Activated T-helper 1 cell treated with anti-CD3 and anti-CD28 coated beads, Interleukin-12 subunit alpha, Interleukin-12 subunit beta, Interleukin-2, Interleukin-4 antibody, amounts not matched to agents 30 ng/mL and 10 ng/mL and 1 ng/mL, durations not matched to agents 14 hours and 24 hours and 36 hours (primary cell): ENCODE measurements at regions of chr7 and their contacts with region 1.

Region 1: DNA sequence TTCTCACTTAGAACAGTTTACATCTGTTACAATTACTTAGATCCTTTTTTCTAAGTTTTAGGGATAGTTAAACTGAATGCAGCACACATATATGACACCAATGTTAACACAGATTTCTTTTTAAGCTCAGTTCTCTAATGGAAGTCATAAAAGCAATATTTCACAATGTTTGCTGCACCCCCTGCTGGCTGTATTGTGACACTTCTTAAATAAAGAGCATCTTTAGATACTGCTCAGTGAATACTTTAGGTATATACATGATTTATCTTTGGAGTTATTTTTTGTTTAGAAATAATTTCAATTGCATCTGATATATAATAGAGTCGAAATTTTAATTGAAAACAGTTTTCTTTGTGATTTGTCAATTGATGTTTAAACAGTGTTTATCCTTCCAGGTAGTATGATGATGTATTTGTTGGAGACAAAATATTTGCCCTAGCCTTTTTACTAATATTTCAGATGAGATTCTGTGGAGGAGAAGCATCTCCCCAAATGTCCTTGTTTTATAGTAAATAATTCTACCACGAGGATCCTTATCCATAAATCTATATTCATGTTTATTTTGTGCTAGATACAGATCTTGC is 174.4 kb downstream of the ST7 start:
- DNase-seq: no peak
- H3K4me3 Mint-ChIP-seq: no peak overlapping the region
- H3K27ac Mint-ChIP-seq: no peak overlapping the region
- H3K4me1 Mint-ChIP-seq: no peaks in the 10 kb centered on the region
- H3K27me3 Mint-ChIP-seq: peaks cover 9% of the 10 kb centered on the region

Region 2: GRCh38 chr7:116311816-116312471 is 815.7 kb before region 1 on chr7:
- intact Hi-C with region 1: loop called (anchors 5 kb)
- DNase-seq: no peak
- H3K4me3 Mint-ChIP-seq: no peak overlapping the region
- H3K27ac Mint-ChIP-seq: no peak overlapping the region
- H3K4me1 Mint-ChIP-seq: peaks cover 2% of the 10 kb centered on the region
- H3K27me3 Mint-ChIP-seq: peaks cover 2% of the 10 kb centered on the region

Region 3: DNA sequence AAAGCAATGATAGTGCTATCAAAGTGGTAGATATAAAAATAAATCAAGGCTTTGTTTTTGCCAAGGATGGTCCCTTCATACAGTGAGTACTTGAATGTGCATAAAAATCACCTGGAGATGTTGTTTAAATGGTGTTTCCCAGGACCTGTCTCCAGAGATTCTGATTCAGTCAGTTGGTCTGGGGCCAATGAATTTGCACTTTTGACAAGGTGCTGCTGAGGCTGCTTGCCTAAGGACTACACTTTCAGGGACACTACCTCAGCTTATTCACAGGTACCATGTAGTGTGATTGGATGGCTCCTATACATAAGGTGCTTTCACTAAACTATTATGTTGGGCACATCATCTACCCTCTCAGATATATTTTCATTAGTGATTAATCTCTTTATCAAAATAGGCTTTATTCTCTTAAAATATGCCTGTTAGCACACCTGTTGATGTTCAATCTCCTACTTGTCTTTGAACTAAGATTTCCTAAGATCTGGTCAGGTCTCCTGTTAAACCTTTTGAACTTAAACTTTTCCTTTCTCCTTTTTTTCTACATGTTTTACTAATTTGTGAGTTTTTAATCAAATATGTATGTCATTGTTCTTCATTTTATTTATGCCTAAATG is 241.0 kb before region 1 on chr7:
- intact Hi-C with region 1: no loop called
- DNase-seq: no peak
- H3K4me3 Mint-ChIP-seq: no peak overlapping the region
- H3K27ac Mint-ChIP-seq: no peak overlapping the region
- H3K4me1 Mint-ChIP-seq: peaks cover 4% of the 10 kb centered on the region
- H3K27me3 Mint-ChIP-seq: no peaks in the 10 kb centered on the region

Region 4: DNA sequence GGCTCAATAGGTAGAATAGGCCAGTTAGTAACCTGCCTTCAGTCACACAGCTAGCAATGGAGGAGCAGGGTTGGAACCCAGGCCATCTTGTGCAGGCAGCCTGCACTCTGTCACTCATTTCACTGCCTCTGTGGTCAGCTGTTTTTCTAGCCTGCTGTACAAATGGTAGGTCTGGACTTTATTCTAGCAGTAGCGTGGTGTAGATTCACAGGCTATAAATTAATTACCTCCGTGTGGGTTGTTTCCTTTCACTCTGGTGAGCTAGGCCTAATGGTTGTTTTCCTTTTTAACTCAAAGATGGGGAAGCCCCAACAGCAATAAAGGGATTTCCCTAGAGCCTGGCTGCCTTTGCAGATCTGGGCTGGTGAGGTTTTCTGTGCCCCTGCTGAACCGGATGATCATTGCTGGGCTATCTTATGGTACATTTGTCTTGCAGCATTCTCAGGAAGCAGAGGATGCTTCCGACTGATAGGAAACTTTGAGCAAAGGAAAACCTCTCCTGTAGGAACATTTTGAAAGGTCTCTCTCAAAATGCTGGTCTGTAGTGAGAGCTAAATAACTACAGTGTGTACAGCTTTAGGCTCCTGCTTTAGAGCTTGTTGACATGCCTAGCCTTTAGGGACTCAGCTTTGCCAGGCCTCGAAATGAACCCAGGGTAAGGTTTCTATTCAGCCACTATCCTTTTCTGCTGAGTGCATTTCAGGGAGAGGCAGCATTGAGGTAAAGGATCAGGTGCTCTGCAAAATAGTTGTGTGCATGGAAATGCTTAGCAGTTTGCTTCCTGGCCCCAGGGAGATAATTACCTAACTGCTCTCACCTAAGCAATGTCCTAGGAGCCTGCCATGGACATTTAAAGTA is 17.0 kb before region 1 on chr7:
- intact Hi-C with region 1: loop called (anchors 1 kb)
- DNase-seq: peak; percentile 30
- H3K4me3 Mint-ChIP-seq: peak overlapping the region; percentile 37
- H3K27ac Mint-ChIP-seq: peak overlapping the region; percentile 15
- H3K4me1 Mint-ChIP-seq: peaks cover 21% of the 10 kb centered on the region
- H3K27me3 Mint-ChIP-seq: peaks cover 26% of the 10 kb centered on the region

Region 5: GRCh38 chr7:117949232-117949631 is 821.6 kb after region 1 on chr7:
- intact Hi-C with region 1: no loop called
- DNase-seq: no peak
- H3K4me3 Mint-ChIP-seq: no peak overlapping the region
- H3K27ac Mint-ChIP-seq: no peak overlapping the region
- H3K4me1 Mint-ChIP-seq: no peaks in the 10 kb centered on the region
- H3K27me3 Mint-ChIP-seq: no peaks in the 10 kb centered on the region